HCT116 (cell line): ENCODE measurements at regions of chr19 and their contacts with region 1.

Region 1: GRCh38 chr19:37114020-37114419 is 35.8 kb downstream of the ZNF420 start:
- DNase-seq: no peak
- ATAC-seq: no peak
- H3K4me3 ChIP-seq: no peak overlapping the region
- H3K27ac ChIP-seq: no peak overlapping the region
- H3K4me1 ChIP-seq: no peaks in the 10 kb centered on the region
- H3K27me3 ChIP-seq: no peaks in the 10 kb centered on the region
- CTCF ChIP-seq: peak; percentile 12 to 61 (median 40); a peak in 3 of 6 replicates
- POLR2A ChIP-seq: no peak
- RAD21 ChIP-seq: peak; percentile 51

Region 2: GRCh38 chr19:37059142-37059541 is 54.9 kb before region 1 on chr19:
- CTCF ChIA-PET with region 1: no interaction called
- POLR2A ChIA-PET with region 1: no interaction called
- RAD21 ChIA-PET with region 1: no interaction called
- intact Hi-C with region 1: no loop called
- DNase-seq: no peak
- ATAC-seq: no peak
- H3K4me3 ChIP-seq: no peak overlapping the region
- H3K27ac ChIP-seq: no peak overlapping the region
- H3K4me1 ChIP-seq: no peaks in the 10 kb centered on the region
- H3K27me3 ChIP-seq: no peaks in the 10 kb centered on the region
- CTCF ChIP-seq: no peak
- POLR2A ChIP-seq: no peak
- RAD21 ChIP-seq: no peak

Region 3: DNA sequence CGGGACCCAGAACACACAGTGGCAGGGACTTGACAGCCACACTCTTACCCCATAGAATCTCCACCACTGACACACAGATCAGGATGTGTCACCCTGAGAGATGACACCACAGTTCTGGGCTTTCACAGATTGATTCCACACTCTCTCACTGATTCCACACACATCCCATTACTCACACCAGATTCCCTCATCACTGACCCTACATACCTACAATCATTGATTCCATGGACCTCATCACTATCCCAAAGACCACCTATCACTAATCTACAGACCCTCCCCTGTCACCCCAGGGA is 199.3 kb after region 1 on chr19:
- CTCF ChIA-PET with region 1: no interaction called
- POLR2A ChIA-PET with region 1: no interaction called
- RAD21 ChIA-PET with region 1: no interaction called
- intact Hi-C with region 1: no loop called
- DNase-seq: no peak
- ATAC-seq: no peak
- H3K4me3 ChIP-seq: no peak overlapping the region
- H3K27ac ChIP-seq: no peak overlapping the region
- H3K4me1 ChIP-seq: peaks cover 0 to 3% of the 10 kb centered on the region in 2 experiments; a peak in 1 of 4 replicates
- H3K27me3 ChIP-seq: no peaks in the 10 kb centered on the region
- CTCF ChIP-seq: no peak
- POLR2A ChIP-seq: no peak
- RAD21 ChIP-seq: no peak

Region 4: DNA sequence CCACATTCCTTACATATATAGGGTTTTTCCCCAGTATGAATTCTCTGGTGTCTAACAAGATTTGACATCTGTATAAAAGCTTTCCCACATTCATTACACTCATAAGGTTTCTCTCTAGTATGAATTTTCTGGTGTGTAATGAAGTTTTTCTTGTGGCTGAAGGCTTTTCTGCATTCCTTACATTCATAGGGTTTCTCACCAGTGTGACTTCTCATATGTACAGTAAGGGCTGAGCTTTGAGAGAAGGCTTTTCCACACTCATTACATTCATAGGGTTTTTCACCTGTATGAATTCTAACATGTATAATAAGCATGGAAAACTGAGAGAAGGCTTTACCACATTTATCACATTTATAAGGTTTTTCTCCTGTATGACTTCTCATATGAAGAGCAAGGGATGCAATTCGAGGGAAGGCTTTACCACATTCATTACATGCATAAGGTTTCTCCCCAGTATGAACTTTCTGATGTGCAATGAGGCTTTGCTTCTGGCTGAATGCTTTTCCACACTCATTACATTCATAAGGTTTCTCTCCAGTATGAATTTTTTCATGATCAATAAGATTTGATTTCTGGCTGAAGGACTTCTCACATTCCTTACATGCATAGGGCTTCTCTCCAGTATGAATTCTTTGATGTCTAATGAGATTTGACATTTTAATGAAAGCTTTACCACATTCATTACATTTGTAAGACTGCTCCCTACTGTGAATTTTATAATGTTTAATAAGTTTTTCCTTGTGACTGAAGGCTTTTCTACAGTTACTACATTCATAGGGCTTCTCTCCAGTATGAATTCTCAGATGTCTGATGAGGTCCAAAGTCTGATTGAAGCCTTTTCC is 299.4 kb after region 1 on chr19:
- CTCF ChIA-PET with region 1: no interaction called
- POLR2A ChIA-PET with region 1: no interaction called
- RAD21 ChIA-PET with region 1: no interaction called
- intact Hi-C with region 1: no loop called
- DNase-seq: no peak
- ATAC-seq: no peak
- H3K4me3 ChIP-seq: no peak overlapping the region
- H3K27ac ChIP-seq: no peak overlapping the region
- H3K4me1 ChIP-seq: no peaks in the 10 kb centered on the region
- H3K27me3 ChIP-seq: no peaks in the 10 kb centered on the region
- CTCF ChIP-seq: no peak
- POLR2A ChIP-seq: no peak
- RAD21 ChIP-seq: no peak

Region 5: GRCh38 chr19:37896180-37896579 is 782.2 kb after region 1 on chr19:
- CTCF ChIA-PET with region 1: no interaction called
- POLR2A ChIA-PET with region 1: no interaction called
- RAD21 ChIA-PET with region 1: no interaction called
- intact Hi-C with region 1: loop called (anchors 5 kb)
- DNase-seq: no peak
- ATAC-seq: no peak
- H3K4me3 ChIP-seq: no peak overlapping the region
- H3K27ac ChIP-seq: no peak overlapping the region
- H3K4me1 ChIP-seq: peaks cover 0 to 8% of the 10 kb centered on the region in 2 experiments; a peak in 1 of 4 replicates
- H3K27me3 ChIP-seq: no peaks in the 10 kb centered on the region
- CTCF ChIP-seq: no peak
- POLR2A ChIP-seq: no peak
- RAD21 ChIP-seq: no peak